Endothelial cell of umbilical vein (primary cell): ENCODE measurements at regions of chr12 and their contacts with region 1.

Region 1: DNA sequence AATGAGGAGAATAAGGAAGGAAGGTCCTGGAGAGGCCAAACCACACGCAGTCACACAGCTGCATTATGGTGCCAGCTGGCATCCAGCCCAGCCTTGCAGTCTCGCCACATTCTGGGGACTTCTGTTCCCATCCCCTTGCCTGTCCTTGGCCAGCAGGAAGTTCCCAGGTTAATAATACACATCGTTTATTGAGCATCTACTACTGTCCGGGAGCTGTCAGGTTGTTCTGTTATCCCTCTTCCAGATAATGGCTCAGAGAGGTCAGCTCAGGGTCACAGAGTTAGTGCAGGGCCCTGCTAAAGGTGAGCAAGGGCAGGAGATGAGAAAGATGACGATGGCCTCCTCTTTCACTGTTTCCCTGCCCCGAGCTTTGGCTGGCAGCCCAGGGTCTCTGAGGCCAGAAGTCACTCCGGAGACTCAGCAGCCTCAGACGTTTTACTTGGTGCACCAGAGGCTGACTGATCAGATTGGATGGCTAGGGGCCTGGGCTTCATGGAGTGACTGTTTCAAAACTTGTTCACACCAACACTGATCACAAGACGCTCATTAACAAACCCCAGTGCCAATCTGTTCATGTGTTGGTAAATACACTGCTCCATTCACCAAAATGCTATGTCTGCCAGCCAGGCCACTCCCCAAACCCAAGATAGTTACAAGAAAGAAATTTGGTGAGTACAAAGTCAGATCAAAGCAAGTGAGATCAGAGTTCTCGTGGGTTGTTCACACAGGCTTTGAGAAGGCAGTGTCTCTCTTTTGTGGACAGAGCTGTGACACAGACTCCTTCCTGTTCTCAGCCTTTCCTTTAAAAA is 79.2 kb downstream of the B4GALNT3 start:
- DNase-seq: peak; percentile 80
- H3K4me3 ChIP-seq: no peak overlapping the region
- H3K27ac ChIP-seq: no peak overlapping the region
- H3K4me1 ChIP-seq: peaks cover 10% of the 10 kb centered on the region
- H3K27me3 ChIP-seq: peaks cover 14 to 15% of the 10 kb centered on the region in 2 experiments
- CTCF ChIP-seq: no peak
- POLR2A ChIP-seq: no peak

Region 2: GRCh38 chr12:452667-453210 is 86.2 kb before region 1 on chr12:
- CTCF ChIA-PET with region 1: interaction called, 36 read pairs
- POLR2A ChIA-PET with region 1: no interaction called
- dilution Hi-C with region 1: no loop called
- intact Hi-C with region 1: no loop called
- DNase-seq: no peak
- H3K4me3 ChIP-seq: no peak overlapping the region
- H3K27ac ChIP-seq: no peak overlapping the region
- H3K4me1 ChIP-seq: no peaks in the 10 kb centered on the region
- H3K27me3 ChIP-seq: peaks cover 36% of the 10 kb centered on the region in 2 experiments
- CTCF ChIP-seq: peak in 1 of 2 donors; percentile 27
- POLR2A ChIP-seq: no peak

Region 3: GRCh38 chr12:509500-509899 is 29.4 kb before region 1 on chr12:
- CTCF ChIA-PET with region 1: interaction called, 4 read pairs
- POLR2A ChIA-PET with region 1: interaction called, 6 read pairs
- dilution Hi-C with region 1: no loop called
- intact Hi-C with region 1: loop called (anchors 1 kb)
- DNase-seq: peak; percentile 67
- H3K4me3 ChIP-seq: no peak overlapping the region
- H3K27ac ChIP-seq: peak overlapping the region; percentile 46
- H3K4me1 ChIP-seq: peaks cover 22% of the 10 kb centered on the region
- H3K27me3 ChIP-seq: peaks cover 0 to 2% of the 10 kb centered on the region in 2 experiments
- CTCF ChIP-seq: no peak
- POLR2A ChIP-seq: no peak

Region 4: DNA sequence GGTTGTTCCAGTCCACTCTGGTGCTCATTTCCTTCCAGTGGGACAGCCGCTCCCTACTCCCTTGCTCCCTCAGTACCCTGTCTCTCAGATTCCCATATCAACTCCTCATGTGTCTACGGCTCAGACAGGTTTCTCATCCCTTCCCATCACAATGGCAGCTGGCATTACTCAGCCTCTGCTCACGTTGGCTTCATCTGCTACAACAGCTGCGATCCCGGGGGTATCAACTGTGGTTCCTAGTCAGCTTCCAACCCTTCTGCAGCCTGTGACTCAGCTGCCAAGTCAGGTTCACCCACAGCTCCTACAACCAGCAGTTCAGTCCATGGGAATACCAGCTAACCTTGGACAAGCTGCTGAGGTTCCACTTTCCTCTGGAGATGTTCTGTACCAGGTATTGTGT is 340.7 kb after region 1 on chr12:
- CTCF ChIA-PET with region 1: no interaction called
- POLR2A ChIA-PET with region 1: no interaction called
- dilution Hi-C with region 1: no loop called
- intact Hi-C with region 1: no loop called
- DNase-seq: no peak
- H3K4me3 ChIP-seq: no peak overlapping the region
- H3K27ac ChIP-seq: no peak overlapping the region
- H3K4me1 ChIP-seq: no peaks in the 10 kb centered on the region
- H3K27me3 ChIP-seq: no peaks in the 10 kb centered on the region
- CTCF ChIP-seq: no peak
- POLR2A ChIP-seq: no peak